BJ (cell line): ENCODE measurements at regions of chr9 and their contacts with region 1.

Region 1: GRCh38 chr9:104868687-104869404 is 59.1 kb downstream of the ABCA1 start:
- DNase-seq: peak; percentile 49
- H3K4me3 ChIP-seq: no peak overlapping the region
- H3K27me3 ChIP-seq: no peaks in the 10 kb centered on the region
- CTCF ChIP-seq: no peak

Region 2: DNA sequence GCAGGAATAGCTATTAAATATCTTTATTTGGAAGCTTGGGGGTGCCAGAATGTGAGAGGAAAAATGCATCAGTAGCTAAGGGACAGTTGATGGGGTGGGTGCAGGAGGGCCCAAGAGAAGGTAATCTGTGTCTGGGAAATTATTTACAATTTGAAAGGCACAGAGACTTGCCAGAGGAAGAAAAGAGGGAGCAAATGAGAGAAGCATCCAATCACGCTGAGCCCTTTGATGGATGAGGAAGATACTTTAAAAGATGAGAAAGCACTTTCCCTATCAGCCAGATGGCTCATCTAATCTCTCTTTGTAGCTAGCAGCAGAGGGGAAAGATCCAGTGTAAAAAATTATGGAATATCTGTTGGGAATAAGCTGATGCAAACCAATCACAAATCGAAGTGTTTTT is 116.1 kb after region 1 on chr9:
- CTCF ChIA-PET with region 1: interaction called, 3 read pairs
- POLR2A ChIA-PET with region 1: interaction called, 21 read pairs
- DNase-seq: no peak
- H3K4me3 ChIP-seq: no peak overlapping the region
- H3K27me3 ChIP-seq: no peaks in the 10 kb centered on the region
- CTCF ChIP-seq: no peak